Naive thymus-derived CD4-positive, alpha-beta T cell (primary cell): ENCODE measurements at regions of chr17 and their contacts with region 1.

Region 1: GRCh38 chr17:48618256-48618897 is 3.3 kb upstream of the HOXB8 start:
- DNase-seq: peak; percentile 62 to 86 (median 74)
- ATAC-seq: peak; percentile 90
- H3K4me3 ChIP-seq: no peak overlapping the region
- H3K4me3 Mint-ChIP-seq: peak overlapping the region in 9 of 10 donors; percentile 12 to 53 (median 40)
- H3K27ac ChIP-seq: no peak overlapping the region
- H3K27ac Mint-ChIP-seq: peak overlapping the region in 3 of 9 donors; percentile 74 to 83 (median 81)
- H3K4me1 ChIP-seq: peaks cover 19 to 23% of the 10 kb centered on the region in 2 donors
- H3K4me1 Mint-ChIP-seq: peaks cover 26 to 49% (median 36%) of the 10 kb centered on the region in 7 donors
- H3K27me3 ChIP-seq: peaks cover 35 to 59% of the 10 kb centered on the region in 2 donors
- H3K27me3 Mint-ChIP-seq: peaks cover 90 to 97% (median 92%) of the 10 kb centered on the region in 5 donors

Region 2: GRCh38 chr17:47840740-47841603 is 777.4 kb before region 1 on chr17 and contains the start of gene SCRN2:
- CTCF ChIA-PET with region 1: no interaction called
- POLR2A ChIA-PET with region 1: no interaction called
- intact Hi-C with region 1: loop called in 1 of 2 experiments (anchors 5 kb)
- DNase-seq: peak; percentile 71 to 94 (median 81)
- ATAC-seq: peak; percentile 94
- H3K4me3 ChIP-seq: peak within 1 kb of the TSS; percentile 95
- H3K4me3 Mint-ChIP-seq: peak within 1 kb of the TSS; percentile 84 to 99 (median 94)
- H3K27ac ChIP-seq: peak within 1 kb of the TSS; percentile 75
- H3K27ac Mint-ChIP-seq: peak within 1 kb of the TSS; percentile 55 to 93 (median 86)
- H3K4me1 ChIP-seq: peaks cover 19 to 21% of the 10 kb centered on the region in 2 donors
- H3K4me1 Mint-ChIP-seq: peaks cover 9 to 49% (median 38%) of the 10 kb centered on the region in 7 donors
- H3K27me3 ChIP-seq: peaks cover 0 to 7% of the 10 kb centered on the region in 2 donors
- H3K27me3 Mint-ChIP-seq: peaks cover 6 to 23% (median 18%) of the 10 kb centered on the region in 5 donors
- total RNA-seq, gene SCRN2: 33.4 to 55.9 (median 41.4) TPM

Region 3: GRCh38 chr17:48084932-48085444 is 533.4 kb before region 1 on chr17:
- CTCF ChIA-PET with region 1: interaction called, 3 read pairs
- POLR2A ChIA-PET with region 1: no interaction called
- intact Hi-C with region 1: loop called (anchors 1 to 5 kb)
- DNase-seq: no peak
- ATAC-seq: no peak
- H3K4me3 ChIP-seq: no peak overlapping the region
- H3K4me3 Mint-ChIP-seq: no peak overlapping the region
- H3K27ac ChIP-seq: no peak overlapping the region
- H3K27ac Mint-ChIP-seq: no peak overlapping the region
- H3K4me1 ChIP-seq: no peaks in the 10 kb centered on the region
- H3K4me1 Mint-ChIP-seq: peaks cover 0 to 20% (median 10%) of the 10 kb centered on the region in 7 donors
- H3K27me3 ChIP-seq: no peaks in the 10 kb centered on the region
- H3K27me3 Mint-ChIP-seq: no peaks in the 10 kb centered on the region

Region 4: GRCh38 chr17:48131216-48131824 is 487.1 kb before region 1 on chr17:
- CTCF ChIA-PET with region 1: no interaction called
- POLR2A ChIA-PET with region 1: no interaction called
- intact Hi-C with region 1: loop called in 1 of 2 experiments (anchors 1 kb)
- DNase-seq: peak in 8 of 9 donors; percentile 21 to 64 (median 56)
- ATAC-seq: peak; percentile 91
- H3K4me3 ChIP-seq: no peak overlapping the region
- H3K4me3 Mint-ChIP-seq: no peak overlapping the region
- H3K27ac ChIP-seq: no peak overlapping the region
- H3K27ac Mint-ChIP-seq: peak overlapping the region in 5 of 9 donors; percentile 75 to 79 (median 78)
- H3K4me1 ChIP-seq: no peaks in the 10 kb centered on the region
- H3K4me1 Mint-ChIP-seq: peaks cover 0 to 4% (median 0%) of the 10 kb centered on the region in 7 donors
- H3K27me3 ChIP-seq: no peaks in the 10 kb centered on the region
- H3K27me3 Mint-ChIP-seq: no peaks in the 10 kb centered on the region

Region 5: GRCh38 chr17:48259694-48260291 is 358.6 kb before region 1 on chr17:
- CTCF ChIA-PET with region 1: interaction called, 4 read pairs
- POLR2A ChIA-PET with region 1: interaction called, 4 read pairs
- intact Hi-C with region 1: loop called in 1 of 2 experiments (anchors 1 kb)
- DNase-seq: no peak
- ATAC-seq: no peak
- H3K4me3 ChIP-seq: no peak overlapping the region
- H3K4me3 Mint-ChIP-seq: no peak overlapping the region
- H3K27ac ChIP-seq: no peak overlapping the region
- H3K27ac Mint-ChIP-seq: no peak overlapping the region
- H3K4me1 ChIP-seq: no peaks in the 10 kb centered on the region
- H3K4me1 Mint-ChIP-seq: peaks cover 4 to 29% (median 10%) of the 10 kb centered on the region in 7 donors
- H3K27me3 ChIP-seq: no peaks in the 10 kb centered on the region
- H3K27me3 Mint-ChIP-seq: no peaks in the 10 kb centered on the region

Region 6: DNA sequence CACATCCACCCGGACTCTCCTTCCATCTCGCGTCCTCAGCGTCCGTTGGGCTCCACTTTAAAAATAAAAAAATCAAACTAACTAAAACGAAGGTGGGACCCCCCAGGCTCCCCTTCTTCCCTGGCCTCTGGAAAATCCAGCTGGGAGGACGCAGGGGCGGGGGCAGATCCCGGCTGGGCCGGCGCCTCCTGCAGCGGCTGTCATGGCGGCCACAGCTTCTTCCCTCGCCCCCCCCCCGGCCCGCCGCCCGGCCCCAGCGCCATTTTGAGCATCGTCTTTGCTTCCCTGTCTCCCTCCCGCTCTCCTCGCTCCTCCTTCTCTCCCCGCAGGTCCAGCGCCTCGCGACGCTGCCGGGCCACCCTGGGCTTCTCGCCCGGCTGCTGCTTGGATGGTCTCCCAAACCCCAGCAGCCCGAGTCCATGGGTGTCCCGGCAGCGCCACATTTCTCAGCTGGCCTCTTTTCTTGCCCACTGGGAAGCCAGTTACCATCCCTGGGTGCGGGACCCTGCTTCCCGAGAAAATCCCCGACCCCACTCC is 76.7 kb before region 1 on chr17:
- CTCF ChIA-PET with region 1: no interaction called
- POLR2A ChIA-PET with region 1: no interaction called
- intact Hi-C with region 1: no loop called
- DNase-seq: peak in 8 of 9 donors; percentile 34 to 59 (median 52)
- ATAC-seq: peak; percentile 54
- H3K4me3 ChIP-seq: peak overlapping the region; percentile 78
- H3K4me3 Mint-ChIP-seq: peak overlapping the region; percentile 91 to 100 (median 98)
- H3K27ac ChIP-seq: peak overlapping the region; percentile 90
- H3K27ac Mint-ChIP-seq: peak overlapping the region; percentile 95 to 100 (median 99)
- H3K4me1 ChIP-seq: peaks cover 0 to 19% of the 10 kb centered on the region in 2 donors
- H3K4me1 Mint-ChIP-seq: peaks cover 20 to 56% (median 41%) of the 10 kb centered on the region in 7 donors
- H3K27me3 ChIP-seq: no peaks in the 10 kb centered on the region
- H3K27me3 Mint-ChIP-seq: peaks cover 0 to 27% (median 11%) of the 10 kb centered on the region in 5 donors

Region 7: GRCh38 chr17:48715496-48716399 is 97.4 kb after region 1 on chr17:
- CTCF ChIA-PET with region 1: no interaction called
- POLR2A ChIA-PET with region 1: no interaction called
- intact Hi-C with region 1: no loop called
- DNase-seq: no peak
- ATAC-seq: no peak
- H3K4me3 ChIP-seq: no peak overlapping the region
- H3K4me3 Mint-ChIP-seq: no peak overlapping the region
- H3K27ac ChIP-seq: no peak overlapping the region
- H3K27ac Mint-ChIP-seq: no peak overlapping the region
- H3K4me1 ChIP-seq: peaks cover 0 to 13% of the 10 kb centered on the region in 2 donors
- H3K4me1 Mint-ChIP-seq: peaks cover 0 to 34% (median 18%) of the 10 kb centered on the region in 7 donors
- H3K27me3 ChIP-seq: peaks cover 18 to 38% of the 10 kb centered on the region in 2 donors
- H3K27me3 Mint-ChIP-seq: peaks cover 65 to 84% (median 78%) of the 10 kb centered on the region in 5 donors

Region 8: DNA sequence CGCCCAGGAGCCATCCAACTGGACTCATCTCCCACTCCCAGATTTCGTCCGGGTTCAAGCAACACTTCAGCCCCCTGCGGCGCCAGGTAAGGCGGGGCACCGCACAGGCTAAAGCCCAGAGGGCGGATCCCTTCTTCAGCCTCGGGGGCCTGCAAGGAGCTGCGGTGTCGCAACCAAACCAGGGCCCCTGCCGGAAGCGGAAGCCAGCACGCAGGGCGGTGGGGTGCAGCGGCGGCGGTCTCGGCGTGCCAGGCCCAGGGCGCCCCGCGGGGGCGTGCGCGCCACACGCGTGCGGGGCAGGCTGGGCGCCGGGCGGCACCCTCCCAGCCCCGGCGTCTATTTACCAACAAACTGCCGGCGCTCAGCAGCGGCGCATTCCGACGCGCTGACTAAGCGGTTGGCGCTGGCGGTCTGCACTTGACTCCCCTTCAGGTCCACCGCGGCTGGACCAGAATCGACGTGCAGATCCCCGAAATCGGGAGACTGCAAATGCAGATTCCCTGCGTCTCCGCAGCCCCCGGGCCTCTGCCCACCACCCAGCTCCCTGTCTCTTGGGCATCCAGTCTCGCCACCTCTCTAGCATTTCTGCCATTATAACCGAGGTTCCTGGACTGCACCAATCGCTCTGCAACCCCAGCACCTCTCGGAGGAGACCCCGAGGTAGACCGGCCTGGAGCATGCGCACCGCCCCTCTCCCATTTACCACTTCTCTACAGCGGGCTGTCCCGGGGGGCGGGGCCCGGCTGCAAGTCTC is 1350.2 kb after region 1 on chr17:
- CTCF ChIA-PET with region 1: no interaction called
- POLR2A ChIA-PET with region 1: no interaction called
- intact Hi-C with region 1: loop called in 1 of 2 experiments (anchors 10 kb)
- DNase-seq: peak; percentile 46 to 77 (median 71)
- ATAC-seq: peak; percentile 83
- H3K4me3 ChIP-seq: peak overlapping the region; percentile 81
- H3K4me3 Mint-ChIP-seq: peak overlapping the region; percentile 82 to 94 (median 90)
- H3K27ac ChIP-seq: no peak overlapping the region
- H3K27ac Mint-ChIP-seq: peak overlapping the region in 7 of 9 donors; percentile 47 to 91 (median 65)
- H3K4me1 ChIP-seq: peaks cover 9 to 40% of the 10 kb centered on the region in 2 donors
- H3K4me1 Mint-ChIP-seq: peaks cover 25 to 79% (median 57%) of the 10 kb centered on the region in 7 donors
- H3K27me3 ChIP-seq: peaks cover 11 to 41% of the 10 kb centered on the region in 2 donors
- H3K27me3 Mint-ChIP-seq: peaks cover 63 to 93% (median 72%) of the 10 kb centered on the region in 5 donors